ENCODE measurements at regions of chr5 and their contacts with region 1.

Region 1: DNA sequence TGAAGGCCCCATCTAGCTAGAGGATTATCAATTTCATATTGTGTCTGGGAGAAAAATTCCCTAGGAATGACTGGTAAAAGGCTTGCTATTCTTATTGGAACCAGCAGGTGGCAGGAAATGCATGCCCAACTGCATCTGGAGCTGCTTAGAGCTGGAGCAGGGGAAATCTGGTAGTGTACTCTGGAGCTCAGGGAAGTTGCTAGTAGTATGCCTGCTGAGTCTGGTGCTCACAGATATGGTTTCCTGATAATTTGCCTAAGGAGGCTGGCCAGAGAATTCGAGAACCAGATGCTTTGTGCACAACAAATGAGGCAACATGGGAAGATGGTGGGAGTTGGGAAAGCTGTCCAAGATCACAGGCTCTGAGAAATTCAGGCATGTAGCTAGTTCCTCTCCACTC is 53.7 kb downstream of the G3BP1 start:
- DNase-seq: peak; percentile 36
- H3K4me3 ChIP-seq: no peak overlapping the region
- H3K27ac ChIP-seq: no peak overlapping the region
- H3K4me1 ChIP-seq: no peaks in the 10 kb centered on the region
- H3K27me3 ChIP-seq: no peaks in the 10 kb centered on the region
- CTCF ChIP-seq: peak; percentile 46 to 76 (median 70)
- POLR2A ChIP-seq: no peak

Region 2: DNA sequence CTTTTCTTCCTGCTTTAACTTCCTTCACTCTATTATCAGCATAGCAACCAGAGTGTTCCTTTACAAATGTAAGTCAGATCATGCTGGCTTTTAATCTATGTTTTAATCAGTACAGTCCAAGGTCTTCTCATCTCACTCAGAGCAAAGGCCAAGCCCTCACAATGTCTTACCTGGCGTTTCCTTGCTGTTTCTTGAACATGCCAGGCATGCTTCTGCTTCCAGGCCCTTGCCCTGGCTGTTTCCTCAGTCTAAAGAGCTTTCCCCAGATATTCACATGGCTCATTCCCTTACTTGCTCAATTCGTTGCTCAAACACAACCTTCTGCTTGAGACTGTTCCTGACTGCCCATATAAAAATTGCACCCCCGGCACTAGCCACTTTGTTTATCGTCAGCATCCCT is 220.9 kb after region 1 on chr5:
- intact Hi-C with region 1: no loop called
- DNase-seq: no peak
- H3K4me3 ChIP-seq: no peak overlapping the region
- H3K27ac ChIP-seq: no peak overlapping the region
- H3K4me1 ChIP-seq: no peaks in the 10 kb centered on the region
- H3K27me3 ChIP-seq: no peaks in the 10 kb centered on the region
- CTCF ChIP-seq: no peak
- POLR2A ChIP-seq: no peak

Region 3: GRCh38 chr5:152142840-152143469 is 317.5 kb after region 1 on chr5:
- intact Hi-C with region 1: loop called (anchors 2 kb)
- DNase-seq: peak; percentile 28
- H3K4me3 ChIP-seq: no peak overlapping the region
- H3K27ac ChIP-seq: no peak overlapping the region
- H3K4me1 ChIP-seq: no peaks in the 10 kb centered on the region
- H3K27me3 ChIP-seq: no peaks in the 10 kb centered on the region
- CTCF ChIP-seq: peak; percentile 43 to 65 (median 59)
- POLR2A ChIP-seq: no peak

Region 4: DNA sequence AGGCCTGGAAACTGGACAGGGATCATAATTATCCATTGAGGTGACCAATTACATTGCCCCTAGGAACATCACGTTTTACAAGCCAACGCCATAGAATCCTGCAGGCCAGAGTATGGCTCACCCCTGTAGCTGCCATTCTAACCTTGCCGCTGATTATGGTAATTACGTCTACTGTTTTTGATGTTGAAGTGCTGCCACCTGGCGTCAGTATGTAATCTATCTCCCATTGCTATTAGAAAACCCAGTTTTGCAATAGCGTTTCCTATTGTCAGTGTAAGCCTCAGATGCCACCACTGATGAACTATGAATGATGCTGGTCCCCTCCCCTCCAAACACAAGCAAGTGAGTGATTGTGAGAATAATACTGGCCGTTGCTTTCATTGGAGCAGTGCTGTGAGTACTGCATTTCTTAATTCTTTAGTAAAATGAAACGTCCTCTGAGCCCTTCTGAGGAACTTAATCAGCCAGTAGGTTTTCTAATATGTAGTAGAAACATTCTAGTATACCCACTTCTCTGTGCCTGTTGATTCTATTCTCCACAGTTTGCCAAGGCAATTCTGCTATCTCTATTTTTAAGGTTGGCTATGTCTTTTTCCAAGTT is 680.1 kb after region 1 on chr5:
- intact Hi-C with region 1: loop called (anchors 5 kb)
- DNase-seq: peak; percentile 24
- H3K4me3 ChIP-seq: no peak overlapping the region
- H3K27ac ChIP-seq: no peak overlapping the region
- H3K4me1 ChIP-seq: no peaks in the 10 kb centered on the region
- H3K27me3 ChIP-seq: no peaks in the 10 kb centered on the region
- CTCF ChIP-seq: peak in 3 of 4 experiments; percentile 33 to 46 (median 43)
- POLR2A ChIP-seq: no peak